ENCODE measurements at regions of chr20 and their contacts with region 1.

Region 1: GRCh38 chr20:33653218-33653899 is 8.8 kb upstream of the C20orf144 start:
- DNase-seq: peak; percentile 65
- H3K4me3 Mint-ChIP-seq: no peak overlapping the region
- H3K27ac Mint-ChIP-seq: peak overlapping the region; percentile 87
- H3K4me1 Mint-ChIP-seq: peaks cover 36% of the 10 kb centered on the region
- H3K27me3 Mint-ChIP-seq: no peaks in the 10 kb centered on the region

Region 2: GRCh38 chr20:33460711-33461110 is 192.6 kb before region 1 on chr20:
- CTCF ChIA-PET with region 1: interaction called, 9 read pairs
- intact Hi-C with region 1: loop called (anchors 1 kb)
- DNase-seq: peak; percentile 9
- H3K4me3 Mint-ChIP-seq: no peak overlapping the region
- H3K27ac Mint-ChIP-seq: no peak overlapping the region
- H3K4me1 Mint-ChIP-seq: no peaks in the 10 kb centered on the region
- H3K27me3 Mint-ChIP-seq: no peaks in the 10 kb centered on the region

Region 3: GRCh38 chr20:33531047-33531877 is 122.1 kb before region 1 on chr20:
- CTCF ChIA-PET with region 1: no interaction called
- intact Hi-C with region 1: no loop called
- DNase-seq: no peak
- H3K4me3 Mint-ChIP-seq: no peak overlapping the region
- H3K27ac Mint-ChIP-seq: no peak overlapping the region
- H3K4me1 Mint-ChIP-seq: peaks cover 17% of the 10 kb centered on the region
- H3K27me3 Mint-ChIP-seq: no peaks in the 10 kb centered on the region

Region 4: GRCh38 chr20:33554914-33555420 is 98.4 kb before region 1 on chr20:
- CTCF ChIA-PET with region 1: interaction called, 3 read pairs
- intact Hi-C with region 1: loop called (anchors 1 kb)
- DNase-seq: peak; percentile 46
- H3K4me3 Mint-ChIP-seq: peak overlapping the region; percentile 21
- H3K27ac Mint-ChIP-seq: peak overlapping the region; percentile 90
- H3K4me1 Mint-ChIP-seq: peaks cover 30% of the 10 kb centered on the region
- H3K27me3 Mint-ChIP-seq: no peaks in the 10 kb centered on the region

Region 5: GRCh38 chr20:33766686-33767432 is 113.5 kb after region 1 on chr20:
- CTCF ChIA-PET with region 1: no interaction called
- intact Hi-C with region 1: no loop called
- DNase-seq: no peak
- H3K4me3 Mint-ChIP-seq: no peak overlapping the region
- H3K27ac Mint-ChIP-seq: no peak overlapping the region
- H3K4me1 Mint-ChIP-seq: no peaks in the 10 kb centered on the region
- H3K27me3 Mint-ChIP-seq: no peaks in the 10 kb centered on the region